GM13977 (cell line): ENCODE measurements at regions of chr2 and their contacts with region 1.

Region 1: DNA sequence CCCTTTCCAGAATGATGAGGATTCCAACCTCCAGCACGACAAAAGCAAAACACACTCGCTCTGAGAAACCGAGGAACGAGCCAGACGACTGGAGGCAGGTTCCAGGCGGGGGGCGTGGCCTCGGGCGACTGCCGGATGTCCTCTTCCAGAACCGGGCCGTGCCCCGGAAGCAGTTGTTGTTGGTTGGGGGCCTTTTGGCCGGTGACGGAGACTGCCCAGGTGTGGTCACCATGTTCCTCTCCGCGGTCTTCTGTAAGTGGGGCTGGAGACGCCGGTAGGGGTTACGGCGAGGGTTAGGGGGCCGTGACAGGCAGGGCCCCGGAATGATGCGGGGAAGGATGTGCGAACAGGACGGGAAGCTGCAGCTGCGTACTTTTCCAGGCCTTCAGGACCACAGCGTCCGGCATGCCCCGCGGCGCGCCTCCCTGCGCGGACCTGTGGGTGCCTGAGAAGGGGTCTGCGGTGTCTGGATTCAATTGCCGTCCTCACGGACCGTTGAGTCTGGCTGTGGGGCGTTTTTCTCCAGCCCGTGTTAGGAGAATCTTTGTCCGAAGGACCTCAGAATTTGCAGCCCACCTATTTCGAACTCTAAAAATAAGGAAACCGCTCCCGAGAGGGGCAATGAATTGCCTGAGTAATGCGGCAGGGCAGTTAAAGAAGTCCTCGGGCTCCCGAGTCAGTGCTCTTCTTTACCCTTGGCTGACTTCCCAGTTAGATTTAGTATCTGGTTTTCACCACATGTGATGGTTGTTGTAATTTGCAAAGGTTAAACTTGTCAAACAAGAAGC is at the start of gene MRPL33:
- DNase-seq: peak; percentile 94
- CTCF ChIP-seq: no peak

Region 2: DNA sequence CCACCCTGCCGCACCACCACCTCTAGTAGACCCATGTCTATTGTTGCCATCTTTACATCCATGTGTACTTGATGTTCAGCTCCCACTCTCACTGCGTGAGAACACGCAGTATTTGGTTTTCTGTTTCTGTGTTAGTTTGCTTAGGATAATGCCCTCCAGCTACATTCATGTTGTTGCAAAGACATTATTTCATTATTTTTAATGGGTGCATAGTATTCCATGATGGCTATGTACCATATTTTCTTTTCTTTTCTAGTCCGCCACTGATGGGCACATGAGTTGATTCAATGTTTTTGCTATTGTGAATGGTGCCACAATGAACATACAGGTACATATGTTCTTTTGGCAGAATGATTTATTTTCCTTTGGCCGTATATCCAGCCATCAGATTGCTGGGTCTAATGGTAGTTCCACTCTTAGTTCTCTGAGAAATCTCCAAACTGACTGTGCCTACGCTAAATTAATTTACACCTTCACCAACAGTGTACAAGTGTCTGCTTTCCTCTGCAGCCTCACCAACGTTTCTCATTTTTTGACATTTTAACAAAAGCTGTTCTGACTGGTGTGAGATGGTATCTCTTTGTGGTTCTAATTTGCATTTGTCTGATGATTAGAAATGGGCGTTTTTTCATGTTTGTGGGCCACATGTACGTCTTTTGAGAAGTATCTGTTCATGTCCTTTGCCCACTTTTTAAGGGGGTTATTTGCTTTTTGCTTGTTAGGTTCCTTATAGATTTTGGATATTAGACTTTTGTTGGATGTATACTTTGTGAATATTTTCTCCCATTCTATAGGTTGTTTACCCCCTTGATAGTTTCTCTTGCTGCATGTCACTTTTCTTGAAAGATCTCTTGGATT is 380.7 kb before region 1 on chr2:
- in situ Hi-C with region 1: no loop called
- DNase-seq: no peak
- CTCF ChIP-seq: no peak

Region 3: GRCh38 chr2:27559228-27559627 is 212.5 kb before region 1 on chr2:
- in situ Hi-C with region 1: no loop called
- DNase-seq: no peak
- CTCF ChIP-seq: no peak

Region 4: DNA sequence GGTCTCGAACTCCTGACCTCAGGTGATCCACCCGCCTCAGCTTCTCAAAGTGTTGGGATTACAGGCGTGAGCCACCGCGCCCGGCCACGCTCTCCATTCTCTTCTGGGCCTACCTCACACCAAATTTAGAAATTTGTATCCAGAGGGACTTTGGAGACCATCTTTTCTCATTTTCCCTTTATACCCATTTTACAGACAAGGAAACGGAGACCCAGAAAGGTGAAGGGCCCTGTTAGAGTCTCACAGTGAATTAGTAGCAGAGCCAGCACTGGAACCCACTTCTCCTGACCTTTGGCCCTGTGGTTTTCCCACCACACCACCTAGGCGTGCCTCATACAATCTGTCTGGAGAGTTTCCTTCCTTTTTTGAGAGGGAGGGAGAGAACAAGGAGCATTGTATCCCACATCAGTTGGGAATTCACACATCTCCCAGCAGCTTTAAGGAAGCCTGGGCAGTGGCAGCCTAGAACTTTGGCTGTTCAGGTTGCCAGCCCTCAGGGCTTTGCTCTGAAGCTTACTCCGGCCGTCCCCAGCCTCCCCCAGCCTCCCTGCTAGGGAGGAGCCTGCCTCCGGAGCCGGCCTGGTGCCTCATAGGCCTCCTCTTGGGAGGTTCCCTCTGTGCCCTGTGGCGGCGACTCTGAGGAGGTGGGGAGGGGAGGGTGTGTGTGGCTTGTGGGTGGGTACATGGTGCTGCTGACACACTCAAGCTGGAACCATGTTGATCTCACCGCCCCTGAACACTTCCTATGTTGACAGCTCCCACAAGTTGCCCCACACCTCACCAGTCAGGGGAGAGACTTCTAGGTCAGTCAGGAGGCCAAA is 634.7 kb after region 1 on chr2:
- in situ Hi-C with region 1: loop called (anchors 25 kb)
- DNase-seq: no peak
- CTCF ChIP-seq: no peak